ENCODE measurements at regions of chr1 and their contacts with region 1.

Region 1: DNA sequence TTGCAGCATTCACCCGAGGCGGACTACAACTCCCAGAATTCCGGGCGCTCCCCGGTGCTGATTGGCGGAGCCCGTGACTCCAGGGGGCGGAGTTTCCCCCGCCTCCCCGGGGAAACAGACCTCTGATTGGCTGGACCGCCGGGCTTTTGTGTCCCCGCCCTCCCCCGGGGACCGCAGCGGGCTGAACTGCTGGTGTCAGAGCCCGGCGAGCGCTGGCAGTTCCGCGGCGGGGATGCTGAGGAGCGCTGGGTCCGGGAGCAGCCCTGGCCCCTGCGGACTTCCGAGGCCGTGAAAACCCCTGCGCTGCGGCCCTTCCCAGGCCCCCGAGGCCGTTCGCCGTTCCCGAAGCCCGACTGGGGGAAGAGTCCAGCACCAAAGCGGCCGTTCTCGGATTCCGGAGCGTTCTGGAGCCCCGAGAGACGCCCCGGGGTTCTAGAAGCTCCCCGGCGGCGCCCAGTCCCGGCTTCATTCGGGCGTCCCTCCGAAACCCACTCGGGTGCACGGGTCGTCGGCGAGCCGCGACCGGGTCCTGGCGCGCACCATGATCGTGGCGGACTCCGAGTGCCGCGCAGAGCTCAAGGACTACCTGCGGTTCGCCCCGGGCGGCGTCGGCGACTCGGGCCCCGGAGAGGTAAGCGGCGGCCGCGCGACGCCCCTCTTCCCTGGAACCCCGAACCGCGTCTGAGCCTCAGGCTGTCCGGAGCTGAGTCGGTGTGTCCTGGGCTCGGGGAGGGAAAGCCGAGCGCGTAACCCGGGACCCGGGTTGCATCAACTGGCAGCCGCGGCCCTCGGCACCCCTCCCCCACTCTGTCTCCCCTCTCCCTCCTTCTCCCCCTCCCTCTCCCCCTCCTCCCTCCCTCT is at the start of gene SESN2:
- DNase-seq: peak; percentile 98 to 100
- H3K4me3 ChIP-seq: peak within 1 kb of the TSS; percentile 99 to 100
- H3K27ac ChIP-seq: peak within 1 kb of the TSS; percentile 92 to 97
- H3K4me1 ChIP-seq: peaks cover 5 to 30% of the 10 kb centered on the region in 2 donors
- H3K27me3 ChIP-seq: no peaks in the 10 kb centered on the region
- CTCF ChIP-seq: no peak
- total RNA-seq, gene SESN2: 7.6 TPM

Region 2: GRCh38 chr1:27772933-27773825 is 486.4 kb before region 1 on chr1 and contains the start of gene STX12:
- intact Hi-C with region 1: loop called (anchors 1 kb)
- DNase-seq: peak; percentile 99 to 100
- H3K4me3 ChIP-seq: peak within 1 kb of the TSS; percentile 75 to 91
- H3K27ac ChIP-seq: peak within 1 kb of the TSS; percentile 96 to 98
- H3K4me1 ChIP-seq: peaks cover 0 to 24% of the 10 kb centered on the region in 2 donors
- H3K27me3 ChIP-seq: no peaks in the 10 kb centered on the region
- CTCF ChIP-seq: no peak
- total RNA-seq, gene STX12: 91.9 TPM

Region 3: DNA sequence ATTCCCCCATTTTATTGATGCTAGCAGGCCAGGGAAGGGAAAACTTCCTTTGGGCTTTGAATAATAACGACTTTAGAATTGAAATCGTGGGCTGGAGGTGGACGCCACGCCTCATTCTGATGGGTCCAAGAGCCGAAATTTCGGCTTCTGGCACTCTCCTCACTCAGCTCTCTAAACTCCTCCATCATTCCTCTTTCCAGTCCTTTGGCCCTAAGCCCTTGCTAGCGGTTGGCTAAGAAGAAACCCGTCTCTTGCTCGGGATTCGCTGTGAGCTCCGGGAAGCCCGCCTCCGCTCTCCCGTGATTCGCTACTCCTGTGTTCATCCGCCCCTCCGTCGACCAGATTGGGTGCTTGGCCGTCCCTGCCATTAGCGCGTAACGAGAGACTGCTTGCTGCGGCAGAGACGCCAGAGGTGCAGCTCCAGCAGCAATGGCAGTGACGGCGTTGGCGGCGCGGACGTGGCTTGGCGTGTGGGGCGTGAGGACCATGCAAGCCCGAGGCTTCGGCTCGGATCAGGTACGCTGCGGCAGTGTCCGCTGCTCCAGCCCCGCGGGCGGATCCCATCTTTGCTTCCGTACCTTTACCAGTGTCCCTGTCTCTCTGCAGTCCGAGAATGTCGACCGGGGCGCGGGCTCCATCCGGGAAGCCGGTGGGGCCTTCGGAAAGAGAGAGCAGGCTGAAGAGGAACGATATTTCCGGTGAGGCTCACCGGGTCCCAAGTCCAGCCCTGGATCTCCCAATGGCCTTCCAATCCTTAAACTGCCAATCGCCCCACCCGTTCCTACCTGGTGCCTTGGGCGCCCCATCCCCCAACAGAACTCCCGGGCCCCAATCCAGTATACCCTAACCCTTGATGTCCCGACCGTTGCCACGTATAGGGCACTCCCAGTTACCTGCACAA is 23.5 kb before region 1 on chr1 and contains the start of gene ATP5IF1:
- intact Hi-C with region 1: loop called (anchors 2 kb)
- DNase-seq: peak; percentile 95 to 99
- H3K4me3 ChIP-seq: peak within 1 kb of the TSS; percentile 80 to 86
- H3K27ac ChIP-seq: peak within 1 kb of the TSS; percentile 83 to 85
- H3K4me1 ChIP-seq: peaks cover 7 to 28% of the 10 kb centered on the region in 2 donors
- H3K27me3 ChIP-seq: no peaks in the 10 kb centered on the region
- CTCF ChIP-seq: peak in 1 of 3 experiments; percentile 8
- total RNA-seq, gene ATP5IF1: 220 TPM

Region 4: DNA sequence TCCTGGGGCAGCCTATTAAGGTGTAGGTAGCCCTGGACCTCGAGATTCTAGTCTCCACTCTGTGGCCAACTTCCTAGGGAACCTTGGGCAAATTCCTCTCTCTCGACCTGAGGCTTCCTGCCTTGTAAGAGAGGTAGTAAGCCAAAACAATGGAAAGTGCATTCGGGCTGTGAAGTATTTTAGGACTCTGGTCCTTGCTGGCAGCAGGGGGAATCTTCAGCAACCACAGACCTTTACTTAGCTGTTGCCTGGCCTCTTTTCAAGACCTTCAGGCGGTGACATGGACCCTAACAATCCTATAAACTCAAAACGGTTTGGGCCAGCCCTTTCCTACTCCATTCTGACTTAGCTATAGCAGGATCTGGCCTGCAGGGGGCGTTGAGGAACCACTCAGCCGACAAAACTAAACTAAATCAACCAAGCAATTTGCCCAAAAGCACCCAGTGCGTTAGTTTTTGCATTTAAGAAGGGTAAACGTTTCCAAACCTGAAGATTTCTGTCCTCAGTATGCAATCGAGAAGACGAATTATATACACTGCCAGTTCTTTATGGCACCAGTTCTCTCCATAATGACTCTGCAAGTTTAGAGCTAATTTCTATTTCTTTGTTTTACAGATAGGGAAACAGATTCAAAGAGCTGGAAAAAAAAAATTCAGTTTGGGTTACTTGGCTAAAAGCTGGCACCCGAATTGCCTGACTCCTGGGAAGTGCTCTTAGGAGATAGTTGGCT is 11.1 kb before region 1 on chr1:
- intact Hi-C with region 1: loop called (anchors 1 kb)
- DNase-seq: peak in 1 of 2 donors; percentile 90
- H3K4me3 ChIP-seq: peak overlapping the region; percentile 31 to 54
- H3K27ac ChIP-seq: peak overlapping the region; percentile 79 to 87
- H3K4me1 ChIP-seq: peaks cover 14 to 29% of the 10 kb centered on the region in 2 donors
- H3K27me3 ChIP-seq: no peaks in the 10 kb centered on the region
- CTCF ChIP-seq: peak; percentile 81 to 95 (median 90)

Region 5: DNA sequence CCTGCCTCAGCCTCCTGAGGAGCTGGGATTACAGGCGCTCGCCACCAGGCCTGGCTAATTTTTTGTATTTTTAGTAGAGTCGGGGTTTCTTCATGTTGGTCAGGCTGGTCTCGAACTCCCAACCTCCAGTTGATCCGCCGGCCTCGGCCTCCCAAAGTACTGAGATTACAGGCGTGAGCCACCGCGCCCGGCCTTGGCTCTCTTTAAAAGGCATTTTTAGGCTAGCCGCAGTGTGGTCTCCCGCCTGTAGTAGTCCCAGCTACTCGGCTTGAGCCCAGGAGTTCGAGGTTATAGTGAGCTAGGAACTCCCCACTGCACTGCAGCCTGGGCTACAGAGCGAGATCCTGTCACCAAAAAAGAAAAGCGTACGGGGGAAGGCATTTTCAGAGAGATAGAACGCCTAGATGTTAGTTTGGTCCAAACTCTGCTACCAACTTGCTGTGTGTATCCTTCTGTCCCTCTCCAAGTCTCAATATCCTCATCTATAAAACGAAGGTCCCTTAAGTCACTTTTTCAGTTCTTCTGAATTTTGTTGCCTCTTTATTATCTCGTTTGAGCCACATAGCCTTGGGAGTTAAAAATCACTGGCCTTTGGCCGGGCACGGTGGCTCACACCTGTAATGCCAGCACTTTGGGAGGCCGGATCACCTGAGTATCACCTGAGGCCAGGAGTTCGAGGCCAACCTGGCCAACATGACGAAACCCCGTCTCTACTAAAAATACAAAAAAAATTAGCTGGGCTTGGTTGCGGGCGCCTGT is 70.0 kb after region 1 on chr1:
- intact Hi-C with region 1: loop called (anchors 2 kb)
- DNase-seq: peak in 1 of 2 donors; percentile 67
- H3K4me3 ChIP-seq: peak overlapping the region; percentile 63 to 71
- H3K27ac ChIP-seq: peak overlapping the region; percentile 75 to 82
- H3K4me1 ChIP-seq: peaks cover 2 to 10% of the 10 kb centered on the region in 2 donors
- H3K27me3 ChIP-seq: no peaks in the 10 kb centered on the region
- CTCF ChIP-seq: peak in 1 of 3 experiments; percentile 11

Region 6: DNA sequence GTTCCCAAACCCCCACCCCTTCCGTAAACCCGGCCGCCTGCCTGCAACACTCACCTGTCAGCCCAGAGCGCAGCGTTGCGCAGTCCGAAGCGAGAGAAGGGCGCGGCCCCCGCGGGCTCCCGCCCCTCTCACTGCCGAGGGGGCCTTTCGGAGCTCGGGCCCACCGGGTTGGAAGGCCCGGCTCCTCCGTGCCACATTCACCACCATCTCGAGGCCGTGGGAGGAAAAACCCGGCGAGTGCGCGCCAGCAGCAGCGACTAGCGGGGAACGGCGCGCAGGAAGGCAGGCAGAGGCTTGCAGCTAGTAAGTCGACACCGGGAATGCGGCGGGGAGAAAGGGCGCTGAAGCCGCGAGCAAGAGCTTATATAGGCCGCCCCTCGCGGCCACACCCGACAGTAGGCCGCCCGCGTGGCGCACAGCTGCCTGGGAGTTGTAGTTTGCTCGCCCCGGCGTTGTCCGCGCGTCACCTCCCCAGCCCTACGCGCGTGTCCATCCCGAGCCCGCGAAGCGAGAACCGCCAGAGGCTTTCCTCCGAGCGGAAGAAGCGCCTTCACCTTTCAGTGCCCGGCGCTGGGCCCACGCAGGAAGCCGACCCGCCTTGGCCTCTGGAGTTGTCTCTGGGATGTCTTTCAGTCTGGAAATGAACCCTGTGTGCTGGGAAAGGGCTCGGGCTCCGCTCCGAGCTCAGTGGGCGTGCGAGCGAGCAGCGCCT is 322.2 kb after region 1 on chr1:
- intact Hi-C with region 1: loop called (anchors 5 kb)
- DNase-seq: peak; percentile 85 to 97
- H3K4me3 ChIP-seq: peak overlapping the region; percentile 77 to 86
- H3K27ac ChIP-seq: peak overlapping the region; percentile 91 to 92
- H3K4me1 ChIP-seq: peaks cover 8 to 14% of the 10 kb centered on the region in 2 donors
- H3K27me3 ChIP-seq: no peaks in the 10 kb centered on the region
- CTCF ChIP-seq: peak in 1 of 3 experiments; percentile 35

Region 7: DNA sequence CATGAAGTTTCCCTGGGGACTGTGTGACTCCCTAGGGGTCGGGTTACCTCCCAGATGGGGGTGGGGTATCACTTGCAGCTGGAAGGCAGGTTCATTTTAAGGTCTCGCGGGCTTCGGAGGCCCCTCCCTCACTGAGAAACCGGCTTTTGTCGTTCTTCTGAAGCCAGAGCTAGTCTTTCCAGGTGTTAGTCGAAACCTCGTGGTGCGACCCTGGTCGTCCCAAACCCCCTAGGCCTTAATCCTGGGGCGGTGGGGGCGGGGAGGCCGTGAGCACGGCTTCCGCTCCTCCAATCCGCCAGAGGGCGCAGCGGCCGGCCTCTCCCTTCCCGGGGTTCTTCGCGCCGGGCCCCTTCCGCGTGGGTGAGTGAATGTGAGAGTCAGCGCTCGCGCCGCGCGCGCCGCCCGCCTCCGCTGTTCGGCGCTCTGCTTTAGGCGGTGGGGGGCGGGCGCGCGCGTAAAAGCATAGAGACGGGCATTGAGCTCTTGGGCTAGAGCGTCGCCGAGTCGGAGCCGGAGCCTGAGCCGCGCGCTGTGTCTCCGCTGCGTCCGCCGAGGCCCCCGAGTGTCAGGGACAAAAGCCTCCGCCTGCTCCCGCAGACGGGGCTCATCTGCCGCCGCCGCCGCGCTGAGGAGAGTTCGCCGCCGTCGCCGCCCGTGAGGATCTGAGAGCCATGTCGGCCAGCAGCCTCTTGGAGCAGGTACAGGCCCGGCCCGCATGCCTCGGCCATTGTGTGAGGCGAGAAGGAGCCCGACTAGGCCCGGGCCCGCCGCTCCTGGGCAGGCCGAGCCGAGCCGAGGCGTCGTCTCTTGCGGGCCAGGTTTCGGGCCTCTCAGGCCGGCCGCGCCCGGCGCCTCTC is 477.1 kb after region 1 on chr1 and contains the start of gene YTHDF2:
- intact Hi-C with region 1: loop called (anchors 2 kb)
- DNase-seq: peak; percentile 86 to 99
- H3K4me3 ChIP-seq: peak within 1 kb of the TSS; percentile 96 to 97
- H3K27ac ChIP-seq: peak within 1 kb of the TSS; percentile 93 to 94
- H3K4me1 ChIP-seq: peaks cover 5 to 19% of the 10 kb centered on the region in 2 donors
- H3K27me3 ChIP-seq: no peaks in the 10 kb centered on the region
- CTCF ChIP-seq: peak; percentile 93 to 95 (median 95)
- total RNA-seq, gene YTHDF2: 50.6 TPM

Measured in ascending aorta (tissue), 2 donors.